GM12878 (cell line): ENCODE measurements at regions of chr4 and their contacts with region 1.

Region 1: DNA sequence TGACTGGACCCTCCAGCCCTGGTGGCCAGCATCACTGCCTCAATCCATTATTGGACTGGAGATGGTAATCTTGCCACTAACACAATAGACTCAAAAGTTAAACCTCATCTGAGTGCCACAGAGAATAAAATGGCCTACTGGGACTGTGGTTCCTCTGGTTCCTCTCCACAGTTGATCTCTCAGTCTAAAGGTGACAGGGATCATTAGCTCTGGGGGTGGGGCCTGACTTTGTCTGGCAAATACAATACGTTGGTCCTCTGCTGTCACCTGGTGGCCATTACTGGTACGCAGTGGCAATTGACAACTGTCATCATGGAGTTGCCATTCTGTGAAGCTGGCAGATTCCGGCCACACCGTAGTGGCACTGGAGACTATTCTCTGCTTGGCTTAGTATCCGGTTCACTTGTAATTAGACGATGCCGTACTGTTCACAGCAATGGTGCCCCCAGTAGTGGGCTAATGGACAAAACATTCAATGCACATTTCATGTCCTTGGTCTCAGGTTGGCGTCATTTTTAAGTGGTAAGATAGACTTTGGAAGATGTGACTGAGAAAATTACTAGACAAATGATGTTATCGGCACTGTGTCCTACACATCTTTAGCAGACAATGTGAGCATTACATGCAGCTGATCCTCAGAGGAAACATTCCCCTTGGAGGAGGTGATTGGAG is 6.7 kb downstream of the FGFBP2 start:
- DNase-seq: peak; percentile 55
- ATAC-seq: peak; percentile 90
- H3K4me3 ChIP-seq: no peak overlapping the region
- H3K27ac ChIP-seq: no peak overlapping the region
- H3K4me1 ChIP-seq: 0 out of 2 replicates have a peak, but pooled peaks cover 3% of the 10 kb centered on the region
- H3K27me3 ChIP-seq: no peaks in the 10 kb centered on the region
- CTCF ChIP-seq: peak; percentile 86 to 98 (median 92)
- EP300 ChIP-seq: no peak
- POLR2A ChIP-seq: no peak
- RAD21 ChIP-seq: peak; percentile 95

Region 2: DNA sequence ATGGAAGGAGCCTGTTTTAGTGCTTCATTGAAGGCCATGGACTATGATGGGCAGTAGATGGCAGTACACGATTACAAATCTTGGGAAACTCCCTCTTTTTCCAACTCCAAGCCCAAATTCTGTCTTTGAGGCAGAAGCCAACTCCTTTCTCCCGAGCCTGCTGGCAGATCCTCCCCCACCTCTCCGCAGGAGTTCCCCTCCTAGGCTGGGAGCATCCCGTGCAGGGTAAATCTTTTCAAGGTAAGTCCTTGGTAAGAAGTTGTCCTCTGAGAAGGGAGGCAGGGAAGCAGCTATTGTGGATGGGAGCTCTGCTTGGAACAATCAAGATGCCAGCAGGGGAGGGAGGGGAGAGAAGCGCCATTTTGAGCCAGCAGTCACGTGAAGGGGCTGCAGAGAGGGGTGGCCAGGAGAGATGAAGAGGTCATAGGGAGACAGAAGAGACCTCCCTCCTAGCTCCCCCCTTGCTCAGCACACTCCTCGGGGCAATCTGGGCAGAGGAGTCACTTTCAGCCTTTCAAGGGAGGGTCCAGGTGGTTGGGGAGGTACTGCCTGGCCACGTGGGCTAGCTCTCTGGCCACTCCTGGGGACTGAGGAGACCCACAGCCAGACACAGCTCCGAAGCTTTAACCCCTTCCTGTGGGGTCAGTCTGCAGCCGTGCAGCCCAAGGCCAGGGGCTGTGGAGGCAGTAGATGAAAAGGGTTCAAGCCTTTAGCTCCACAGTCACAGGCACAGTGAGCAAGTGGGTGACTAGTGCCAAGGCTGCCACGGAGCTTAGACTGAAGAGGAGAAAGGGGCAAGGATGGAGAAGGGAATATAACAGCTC is 477.0 kb before region 1 on chr4:
- CTCF ChIA-PET with region 1: interaction called, 17 read pairs
- POLR2A ChIA-PET with region 1: no interaction called
- RAD21 ChIA-PET with region 1: interaction called, 9 read pairs
- SMC1A ChIA-PET with region 1: interaction called, 7 read pairs
- in situ Hi-C with region 1: no loop called
- intact Hi-C with region 1: loop called (anchors 1 kb)
- DNase-seq: no peak
- ATAC-seq: peak; percentile 84
- H3K4me3 ChIP-seq: no peak overlapping the region
- H3K27ac ChIP-seq: no peak overlapping the region
- H3K4me1 ChIP-seq: no peaks in the 10 kb centered on the region
- H3K27me3 ChIP-seq: no peaks in the 10 kb centered on the region
- CTCF ChIP-seq: peak; percentile 51 to 74 (median 57); a peak in 5 of 6 replicates
- EP300 ChIP-seq: no peak
- POLR2A ChIP-seq: no peak
- RAD21 ChIP-seq: peak; percentile 79

Region 3: GRCh38 chr4:15729910-15730533 is 226.3 kb before region 1 on chr4:
- CTCF ChIA-PET with region 1: interaction called, 18 read pairs
- POLR2A ChIA-PET with region 1: no interaction called
- RAD21 ChIA-PET with region 1: interaction called, 16 read pairs
- SMC1A ChIA-PET with region 1: interaction called, 14 read pairs
- in situ Hi-C with region 1: loop called (anchors 5 kb)
- intact Hi-C with region 1: loop called (anchors 1 kb)
- DNase-seq: peak; percentile 2
- ATAC-seq: peak; percentile 84
- H3K4me3 ChIP-seq: no peak overlapping the region
- H3K27ac ChIP-seq: no peak overlapping the region
- H3K4me1 ChIP-seq: no peaks in the 10 kb centered on the region
- H3K27me3 ChIP-seq: no peaks in the 10 kb centered on the region; a peak in 1 of 4 replicates
- CTCF ChIP-seq: peak; percentile 69 to 77 (median 74)
- EP300 ChIP-seq: no peak
- POLR2A ChIP-seq: no peak
- RAD21 ChIP-seq: peak; percentile 92

Region 4: DNA sequence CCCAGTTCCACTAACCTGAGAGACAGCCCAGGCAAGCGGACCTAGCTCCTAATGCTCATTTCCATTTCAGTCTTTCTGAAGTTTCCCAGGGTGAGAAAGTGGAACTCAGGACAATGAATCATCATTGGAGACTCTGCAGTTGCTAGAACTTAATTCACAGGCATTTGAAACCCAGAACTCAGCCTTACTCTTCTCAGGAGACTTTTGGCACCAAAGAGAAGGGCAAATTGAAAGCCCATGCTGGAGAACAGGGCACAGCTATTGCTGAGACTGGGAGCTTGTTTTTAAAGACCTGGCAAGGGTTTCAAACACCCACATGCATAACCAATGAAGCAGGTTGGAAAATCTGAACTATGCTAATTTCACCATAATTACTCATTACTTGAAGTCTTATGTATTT is 217.4 kb before region 1 on chr4:
- CTCF ChIA-PET with region 1: interaction called, 18 read pairs
- POLR2A ChIA-PET with region 1: no interaction called
- RAD21 ChIA-PET with region 1: interaction called, 6 read pairs
- SMC1A ChIA-PET with region 1: interaction called, 9 read pairs
- in situ Hi-C with region 1: loop called (anchors 5 kb)
- intact Hi-C with region 1: no loop called
- DNase-seq: no peak
- ATAC-seq: no peak
- H3K4me3 ChIP-seq: no peak overlapping the region
- H3K27ac ChIP-seq: no peak overlapping the region
- H3K4me1 ChIP-seq: no peaks in the 10 kb centered on the region
- H3K27me3 ChIP-seq: no peaks in the 10 kb centered on the region; a peak in 1 of 4 replicates
- CTCF ChIP-seq: no peak
- EP300 ChIP-seq: no peak
- POLR2A ChIP-seq: no peak
- RAD21 ChIP-seq: no peak

Region 5: GRCh38 chr4:15893962-15894361 is 62.4 kb before region 1 on chr4:
- CTCF ChIA-PET with region 1: interaction called, 18 read pairs
- POLR2A ChIA-PET with region 1: interaction called, 4 read pairs
- RAD21 ChIA-PET with region 1: interaction called, 13 read pairs
- SMC1A ChIA-PET with region 1: interaction called, 11 read pairs
- in situ Hi-C with region 1: loop called (anchors 10 kb)
- intact Hi-C with region 1: loop called (anchors 2 kb)
- DNase-seq: no peak
- ATAC-seq: no peak
- H3K4me3 ChIP-seq: no peak overlapping the region
- H3K27ac ChIP-seq: no peak overlapping the region
- H3K4me1 ChIP-seq: peaks cover 13% of the 10 kb centered on the region; the same call in 1 of the 2 replicates
- H3K27me3 ChIP-seq: no peaks in the 10 kb centered on the region
- CTCF ChIP-seq: no peak
- EP300 ChIP-seq: no peak
- POLR2A ChIP-seq: no peak
- RAD21 ChIP-seq: no peak